ENCODE measurements at regions of chr17 and their contacts with region 1.

Region 1: GRCh38 chr17:63919311-63919723 is 678 bp upstream of the GH1 start:
- DNase-seq: peak; percentile 57 to 81 (median 71)
- H3K4me3 ChIP-seq: no peak overlapping the region
- H3K4me3 Mint-ChIP-seq: no peak overlapping the region
- H3K27ac ChIP-seq: no peak overlapping the region
- H3K27ac Mint-ChIP-seq: peak overlapping the region in 5 of 8 donors; percentile 17 to 78 (median 63)
- H3K4me1 ChIP-seq: peaks cover 8% of the 10 kb centered on the region
- H3K4me1 Mint-ChIP-seq: peaks cover 6 to 10% (median 10%) of the 10 kb centered on the region in 3 donors
- H3K27me3 ChIP-seq: no peaks in the 10 kb centered on the region
- H3K27me3 Mint-ChIP-seq: peaks cover 0 to 3% of the 10 kb centered on the region in 2 donors

Region 2: DNA sequence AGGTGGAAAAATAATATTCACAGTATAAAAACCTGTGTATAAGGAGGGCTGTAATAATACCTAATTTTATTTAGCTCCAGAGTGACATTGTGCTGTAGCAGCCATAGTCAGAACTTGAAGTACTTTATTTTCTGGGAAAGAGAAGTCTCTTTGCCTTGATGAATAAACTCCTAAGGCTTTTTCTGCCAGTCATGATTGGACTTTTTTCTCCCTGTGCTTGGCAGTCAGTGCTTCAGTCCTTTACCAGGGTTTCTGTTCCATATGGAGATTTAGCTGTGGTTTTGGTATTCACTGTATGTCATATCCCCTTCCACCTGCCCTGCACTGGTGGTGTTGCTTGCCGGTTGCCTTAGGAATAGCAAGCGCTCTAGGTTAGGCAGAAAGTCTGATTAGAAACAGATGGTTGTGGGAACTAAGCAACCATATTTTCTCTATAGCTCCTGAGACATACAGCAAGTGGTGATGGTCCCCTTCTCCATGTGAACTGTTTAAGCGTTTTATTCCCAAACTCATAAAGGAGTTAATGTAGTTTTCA is 120.7 kb before region 1 on chr17:
- CTCF ChIA-PET with region 1: no interaction called
- POLR2A ChIA-PET with region 1: no interaction called
- DNase-seq: no peak
- H3K4me3 ChIP-seq: no peak overlapping the region
- H3K4me3 Mint-ChIP-seq: no peak overlapping the region
- H3K27ac ChIP-seq: no peak overlapping the region
- H3K27ac Mint-ChIP-seq: peak overlapping the region in 1 of 8 donors; percentile 4
- H3K4me1 ChIP-seq: no peaks in the 10 kb centered on the region
- H3K4me1 Mint-ChIP-seq: peaks cover 0 to 8% (median 0%) of the 10 kb centered on the region in 3 donors
- H3K27me3 ChIP-seq: no peaks in the 10 kb centered on the region
- H3K27me3 Mint-ChIP-seq: no peaks in the 10 kb centered on the region

Region 3: GRCh38 chr17:63931099-63931561 is 11.8 kb after region 1 on chr17:
- CTCF ChIA-PET with region 1: interaction called, 18 read pairs
- POLR2A ChIA-PET with region 1: no interaction called
- DNase-seq: peak; percentile 40 to 74 (median 60)
- H3K4me3 ChIP-seq: peak overlapping the region; percentile 68
- H3K4me3 Mint-ChIP-seq: peak overlapping the region; percentile 75 to 93 (median 90)
- H3K27ac ChIP-seq: peak overlapping the region; percentile 27
- H3K27ac Mint-ChIP-seq: peak overlapping the region; percentile 81 to 96 (median 91)
- H3K4me1 ChIP-seq: peaks cover 24% of the 10 kb centered on the region
- H3K4me1 Mint-ChIP-seq: peaks cover 20 to 30% (median 23%) of the 10 kb centered on the region in 3 donors
- H3K27me3 ChIP-seq: no peaks in the 10 kb centered on the region
- H3K27me3 Mint-ChIP-seq: no peaks in the 10 kb centered on the region

Region 4: DNA sequence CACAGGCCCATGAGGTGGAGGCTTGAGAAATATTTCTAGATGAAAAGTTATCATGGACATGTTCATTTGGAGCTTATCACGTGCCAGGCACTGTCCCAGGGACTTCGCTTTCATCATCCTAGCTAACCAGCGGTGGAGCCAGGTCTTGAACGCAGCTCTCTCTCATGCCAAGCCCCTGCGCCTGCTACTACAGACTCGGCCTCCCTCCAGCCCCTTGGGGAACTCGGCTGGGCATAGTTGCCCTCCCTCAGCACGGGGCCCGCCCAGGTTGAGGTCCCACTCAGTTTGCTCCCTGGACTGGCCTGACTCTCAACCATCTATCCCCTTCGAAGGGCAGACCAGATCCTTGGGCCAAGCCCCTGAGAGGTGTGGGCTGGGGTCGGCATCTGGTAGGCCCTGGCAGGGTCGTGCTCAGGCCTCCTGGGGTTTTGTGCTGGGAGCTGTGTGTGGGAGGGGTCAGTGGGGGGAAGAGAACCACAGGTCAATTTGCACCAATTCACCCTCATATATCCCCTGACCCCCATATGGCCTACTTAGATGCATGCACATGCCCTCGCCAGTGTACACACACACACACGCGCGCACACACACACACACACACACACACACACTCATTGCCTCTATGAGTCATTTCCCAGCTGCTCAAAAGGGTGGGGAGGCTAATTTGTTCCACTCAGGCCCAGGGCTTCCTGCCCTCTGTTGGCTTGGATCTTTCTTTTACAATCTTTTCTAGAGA is 65.5 kb after region 1 on chr17:
- CTCF ChIA-PET with region 1: interaction called, 30 read pairs
- POLR2A ChIA-PET with region 1: no interaction called
- DNase-seq: peak in 4 of 5 donors; percentile 51 to 64 (median 59)
- H3K4me3 ChIP-seq: no peak overlapping the region
- H3K4me3 Mint-ChIP-seq: peak overlapping the region in 6 of 7 donors; percentile 3 to 61 (median 30)
- H3K27ac ChIP-seq: no peak overlapping the region
- H3K27ac Mint-ChIP-seq: peak overlapping the region; percentile 61 to 78 (median 75)
- H3K4me1 ChIP-seq: peaks cover 11% of the 10 kb centered on the region
- H3K4me1 Mint-ChIP-seq: peaks cover 20 to 26% (median 24%) of the 10 kb centered on the region in 3 donors
- H3K27me3 ChIP-seq: no peaks in the 10 kb centered on the region
- H3K27me3 Mint-ChIP-seq: no peaks in the 10 kb centered on the region

Region 5: DNA sequence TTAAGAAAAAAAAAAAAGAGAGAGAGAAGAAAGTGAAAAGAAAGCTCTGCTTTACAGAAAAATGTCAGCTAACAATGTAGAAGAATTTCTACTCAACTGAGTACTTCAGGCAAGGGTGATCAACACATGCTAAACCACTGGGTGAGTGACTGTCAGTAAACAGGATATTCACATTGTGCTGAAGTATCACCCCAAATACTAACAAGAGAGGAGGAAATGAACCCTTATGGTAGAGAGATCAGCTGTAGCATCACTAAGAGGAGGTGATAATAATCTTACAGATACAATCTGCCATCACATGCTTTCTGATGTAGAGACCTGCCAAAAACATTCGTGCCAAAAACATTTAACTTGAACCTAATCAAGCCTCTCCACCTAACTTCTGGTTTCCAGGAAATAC is 131.8 kb after region 1 on chr17:
- CTCF ChIA-PET with region 1: interaction called, 12 read pairs
- POLR2A ChIA-PET with region 1: no interaction called
- DNase-seq: peak in 2 of 5 donors; percentile 53 to 66
- H3K4me3 ChIP-seq: peak overlapping the region; percentile 35
- H3K4me3 Mint-ChIP-seq: peak overlapping the region in 6 of 7 donors; percentile 21 to 84 (median 70)
- H3K27ac ChIP-seq: peak overlapping the region; percentile 38
- H3K27ac Mint-ChIP-seq: peak overlapping the region; percentile 61 to 96 (median 92)
- H3K4me1 ChIP-seq: peaks cover 45% of the 10 kb centered on the region
- H3K4me1 Mint-ChIP-seq: peaks cover 47 to 65% (median 60%) of the 10 kb centered on the region in 3 donors
- H3K27me3 ChIP-seq: no peaks in the 10 kb centered on the region
- H3K27me3 Mint-ChIP-seq: no peaks in the 10 kb centered on the region

Region 6: DNA sequence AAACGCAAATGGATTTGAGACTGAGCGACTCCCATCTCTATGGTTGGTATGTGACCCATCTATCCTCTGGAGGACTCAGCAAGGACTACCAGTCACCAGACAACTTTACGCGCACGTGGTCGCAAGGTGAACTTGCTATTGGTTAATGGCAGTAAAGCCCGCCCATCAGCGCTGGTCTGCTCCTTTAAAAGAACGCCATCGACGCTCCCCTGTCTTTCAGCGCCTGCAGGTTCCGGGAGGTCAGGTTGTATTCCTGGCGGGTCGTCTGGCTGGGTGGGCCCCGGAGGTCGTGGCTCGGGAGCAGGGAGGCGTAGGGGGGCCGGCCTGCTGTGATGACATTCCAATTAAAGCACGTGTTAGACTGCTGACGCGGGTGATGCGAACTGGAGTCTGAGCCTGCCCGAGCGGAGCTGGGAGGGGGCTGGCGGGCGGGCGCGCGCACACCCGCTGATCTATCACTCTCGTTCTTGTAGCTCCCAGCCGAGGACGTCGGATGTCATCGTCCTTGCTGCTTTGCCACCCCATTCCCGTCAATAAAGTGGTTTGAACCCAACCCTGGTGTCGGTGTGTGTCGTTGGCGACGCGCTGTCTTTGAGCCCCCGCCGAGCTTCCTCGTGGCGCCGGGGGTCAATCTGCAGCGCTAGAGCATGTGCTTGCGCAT is 226.6 kb after region 1 on chr17:
- CTCF ChIA-PET with region 1: interaction called, 11 read pairs
- POLR2A ChIA-PET with region 1: interaction called, 6 read pairs
- DNase-seq: peak; percentile 89 to 98 (median 95)
- H3K4me3 ChIP-seq: peak overlapping the region; percentile 86
- H3K4me3 Mint-ChIP-seq: no peak overlapping the region
- H3K27ac ChIP-seq: peak overlapping the region; percentile 83
- H3K27ac Mint-ChIP-seq: no peak overlapping the region
- H3K4me1 ChIP-seq: peaks cover 25% of the 10 kb centered on the region
- H3K4me1 Mint-ChIP-seq: peaks cover 20 to 26% (median 26%) of the 10 kb centered on the region in 3 donors
- H3K27me3 ChIP-seq: no peaks in the 10 kb centered on the region
- H3K27me3 Mint-ChIP-seq: no peaks in the 10 kb centered on the region